GM10248 (cell line): ENCODE measurements at regions of chr1 and their contacts with region 1.

Region 1: GRCh38 chr1:221741711-221742554 is at the start of gene DUSP10:
- DNase-seq: peak; percentile 99
- CTCF ChIP-seq: peak; percentile 2

Region 2: GRCh38 chr1:221594576-221594975 is 147.4 kb before region 1 on chr1:
- CTCF ChIA-PET with region 1: no interaction called
- POLR2A ChIA-PET with region 1: no interaction called
- DNase-seq: no peak
- CTCF ChIP-seq: no peak

Region 3: DNA sequence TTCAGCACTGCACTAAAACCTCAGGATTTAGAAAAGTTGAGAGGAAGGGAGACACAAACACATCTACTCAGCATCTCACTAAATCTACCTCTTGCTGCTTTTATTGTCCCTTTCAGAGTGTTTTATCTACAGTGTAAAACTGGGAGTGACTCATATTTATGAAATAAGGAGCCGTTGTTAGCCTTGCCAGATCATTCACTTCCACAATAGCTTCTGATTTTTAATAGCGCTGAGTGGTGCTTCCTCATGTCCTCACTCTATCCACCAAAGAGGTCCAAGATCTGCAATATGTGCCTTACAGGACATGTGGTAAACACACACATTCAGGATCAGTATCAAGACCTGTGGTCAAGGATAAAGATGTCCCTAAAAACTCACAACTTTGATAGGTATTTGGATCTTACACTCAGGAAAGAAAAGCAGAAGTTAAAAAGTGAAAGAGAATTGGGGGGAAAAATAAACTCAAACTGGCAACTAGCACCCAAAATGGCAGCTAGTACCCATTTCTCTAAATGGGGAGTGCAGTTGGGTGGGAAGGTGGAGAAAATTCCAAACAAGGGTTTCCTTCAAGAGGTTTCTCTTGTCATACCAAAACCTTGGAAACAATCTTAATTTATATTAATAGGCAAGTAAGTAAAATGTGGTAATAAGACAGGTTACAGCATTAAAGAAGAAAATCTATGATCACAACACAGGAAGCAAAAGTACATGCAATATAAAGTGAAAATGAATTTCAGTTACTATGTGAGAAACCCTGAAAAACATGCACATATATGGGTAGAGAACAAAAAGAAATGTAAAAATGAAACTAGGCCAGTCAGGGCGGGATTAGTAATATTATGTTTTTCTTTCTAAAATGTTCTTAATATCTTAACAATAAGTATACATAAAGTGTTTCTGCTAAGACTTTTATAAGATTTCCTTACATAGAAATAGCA is 15.9 kb before region 1 on chr1:
- CTCF ChIA-PET with region 1: interaction called, 17 read pairs
- POLR2A ChIA-PET with region 1: interaction called, 15 read pairs
- DNase-seq: peak; percentile 27
- CTCF ChIP-seq: no peak